Astrocyte of the cerebellum (primary cell): ENCODE measurements at regions of chr13 and their contacts with region 1.

Region 1: GRCh38 chr13:33110713-33111413 is 94.6 kb downstream of the KL start:
- DNase-seq: no peak
- H3K4me3 ChIP-seq: no peak overlapping the region
- CTCF ChIP-seq: no peak

Region 2: DNA sequence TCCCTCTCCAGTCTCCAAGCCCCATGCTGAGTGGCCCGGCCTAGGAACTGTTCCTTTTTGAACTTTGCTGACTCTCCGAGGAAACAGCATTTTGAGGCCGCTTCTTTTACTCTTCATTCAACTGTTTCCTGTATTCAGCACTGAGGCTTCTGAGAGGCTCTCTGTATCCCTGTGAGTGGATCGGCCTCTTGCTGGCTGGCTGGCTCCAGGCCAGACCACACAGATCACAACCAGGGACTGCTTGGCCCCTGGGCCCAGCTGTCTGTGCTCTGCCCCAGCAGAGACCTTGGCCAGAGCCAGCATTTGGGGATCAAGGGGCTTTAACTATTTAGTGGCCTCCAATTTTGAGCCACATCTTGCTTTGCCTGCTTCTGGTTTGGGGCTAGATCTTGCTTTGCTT is 170.3 kb before region 1 on chr13:
- in situ Hi-C with region 1: no loop called
- DNase-seq: peak; percentile 24
- H3K4me3 ChIP-seq: no peak overlapping the region
- CTCF ChIP-seq: no peak

Region 3: GRCh38 chr13:33069365-33069764 is 41.5 kb before region 1 on chr13:
- in situ Hi-C with region 1: loop called (anchors 5 kb)
- DNase-seq: no peak
- H3K4me3 ChIP-seq: no peak overlapping the region
- CTCF ChIP-seq: no peak

Region 4: DNA sequence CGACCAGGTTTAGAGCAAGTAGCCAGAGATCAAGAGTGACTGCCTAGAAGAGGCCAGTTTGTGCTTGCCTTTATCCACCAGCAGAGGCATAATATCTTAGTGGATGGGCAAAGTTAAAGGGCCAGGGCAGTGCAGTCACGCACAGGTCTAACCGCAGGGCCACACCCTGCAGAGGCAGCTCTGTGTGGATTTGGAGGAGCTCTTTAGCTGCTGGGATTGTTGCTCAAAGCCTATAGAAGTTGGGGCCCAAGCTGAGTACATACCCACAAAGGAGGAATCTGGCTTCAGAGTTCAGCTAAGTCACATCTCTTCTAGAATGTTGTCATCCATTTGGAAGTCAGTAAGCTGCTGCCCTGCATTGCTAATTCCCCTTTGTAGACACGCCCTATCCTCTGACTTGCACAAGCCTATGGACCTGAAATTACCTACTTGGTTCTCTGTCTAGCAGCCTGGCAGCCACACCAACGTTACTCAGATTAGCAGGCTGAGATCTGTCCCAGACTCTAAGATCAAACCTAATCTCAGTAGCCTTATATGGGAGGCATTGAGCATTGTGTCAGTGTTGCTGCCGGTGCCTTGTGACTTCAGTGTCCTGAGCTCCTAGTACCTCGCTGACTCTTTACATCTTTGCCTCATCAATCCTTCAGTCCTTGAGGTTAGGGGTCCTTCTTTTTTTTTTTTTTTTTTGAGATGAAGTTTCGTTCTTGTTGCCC is 277.6 kb after region 1 on chr13:
- in situ Hi-C with region 1: no loop called
- DNase-seq: no peak
- H3K4me3 ChIP-seq: no peak overlapping the region
- CTCF ChIP-seq: no peak